ENCODE measurements at regions of chr2 and their contacts with region 1.

Region 1: DNA sequence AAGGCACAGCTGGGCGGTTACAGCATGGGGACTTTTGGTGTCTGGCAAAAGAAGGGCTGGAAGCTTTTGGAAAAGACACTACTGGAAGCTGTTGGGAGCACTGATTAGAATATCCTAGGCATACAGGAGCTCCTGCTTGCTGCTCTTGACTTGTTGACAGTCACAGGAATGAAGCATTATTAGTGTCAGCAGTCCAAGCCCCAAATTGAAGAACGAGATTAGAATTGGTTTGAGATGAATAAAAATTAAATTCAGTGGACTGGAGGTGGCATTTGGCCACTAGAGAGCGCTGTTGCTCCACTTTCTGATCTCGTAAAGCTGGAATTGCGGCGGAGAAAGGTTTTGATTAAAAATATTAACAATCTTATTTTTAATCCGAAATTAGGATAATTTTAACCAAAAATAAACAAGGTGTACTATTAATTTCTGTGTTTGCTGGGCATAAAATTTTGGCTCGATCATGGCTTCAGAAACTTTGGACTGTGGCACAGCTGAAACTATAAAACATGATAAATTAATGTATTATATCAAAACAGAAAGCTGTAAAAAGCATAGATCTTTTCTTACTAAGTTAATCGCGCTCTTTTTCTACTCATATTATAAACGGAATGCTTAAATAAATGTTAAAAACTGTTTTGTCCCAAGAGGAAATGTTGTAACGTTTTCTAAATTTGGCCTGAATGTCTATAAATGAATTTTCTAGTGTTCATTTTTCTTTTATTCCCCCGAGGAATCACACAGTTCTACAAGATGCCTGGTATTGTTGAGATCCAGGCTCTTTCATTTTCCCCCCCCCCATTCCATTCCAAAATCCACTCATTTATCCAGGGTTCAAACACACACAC is 2.4 kb upstream of the HOXD8 start:
- DNase-seq: peak in 3 of 5 donors; percentile 60 to 71 (median 63)
- ATAC-seq: no peak
- H3K4me3 ChIP-seq: no peak overlapping the region
- H3K27ac ChIP-seq: no peak overlapping the region
- H3K4me1 ChIP-seq: peaks cover 4 to 41% (median 22%) of the 10 kb centered on the region in 12 donors
- H3K27me3 ChIP-seq: peaks cover 79 to 100% (median 94%) of the 10 kb centered on the region in 9 donors
- CTCF ChIP-seq: peak; percentile 82 to 97 (median 93)
- POLR2A ChIP-seq: no peak

Region 2: DNA sequence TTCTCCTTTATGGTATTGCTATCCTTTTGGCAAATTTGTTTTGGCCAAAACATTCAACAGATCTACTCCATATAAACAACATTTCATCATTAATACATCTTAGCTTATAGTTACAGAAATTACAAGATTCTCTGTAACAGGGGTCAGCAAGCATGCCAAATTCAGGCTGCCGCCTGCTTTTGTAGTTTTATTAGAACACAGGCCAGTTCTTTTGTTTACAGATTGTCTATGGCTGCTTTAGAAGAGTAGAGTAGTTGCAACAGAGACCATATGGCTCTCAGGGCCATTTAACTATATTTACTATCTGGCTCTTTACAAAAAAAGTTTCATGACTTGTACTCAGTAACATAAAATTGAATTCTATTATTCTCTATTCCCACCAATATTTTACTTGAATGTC is 179.0 kb before region 1 on chr2:
- intact Hi-C with region 1: no loop called
- DNase-seq: no peak
- ATAC-seq: no peak
- H3K4me3 ChIP-seq: no peak overlapping the region
- H3K27ac ChIP-seq: no peak overlapping the region
- H3K4me1 ChIP-seq: no peaks in the 10 kb centered on the region
- H3K27me3 ChIP-seq: no peaks in the 10 kb centered on the region
- CTCF ChIP-seq: no peak
- POLR2A ChIP-seq: no peak

Region 3: GRCh38 chr2:175976391-175977157 is 150.6 kb before region 1 on chr2:
- intact Hi-C with region 1: no loop called
- DNase-seq: no peak
- ATAC-seq: no peak
- H3K4me3 ChIP-seq: no peak overlapping the region
- H3K27ac ChIP-seq: no peak overlapping the region
- H3K4me1 ChIP-seq: peaks cover 0 to 6% (median 0%) of the 10 kb centered on the region in 12 donors
- H3K27me3 ChIP-seq: no peaks in the 10 kb centered on the region
- CTCF ChIP-seq: no peak
- POLR2A ChIP-seq: no peak

Region 4: GRCh38 chr2:176079285-176079830 is 47.8 kb before region 1 on chr2:
- intact Hi-C with region 1: no loop called
- DNase-seq: no peak
- ATAC-seq: peak in 1 of 4 donors; percentile 15
- H3K4me3 ChIP-seq: peak overlapping the region in 2 of 12 donors; percentile 2 to 18
- H3K27ac ChIP-seq: peak overlapping the region in 1 of 12 donors; percentile 79
- H3K4me1 ChIP-seq: peaks cover 0 to 36% (median 12%) of the 10 kb centered on the region in 12 donors
- H3K27me3 ChIP-seq: peaks cover 86 to 99% (median 97%) of the 10 kb centered on the region in 9 donors
- CTCF ChIP-seq: no peak
- POLR2A ChIP-seq: no peak

Region 5: DNA sequence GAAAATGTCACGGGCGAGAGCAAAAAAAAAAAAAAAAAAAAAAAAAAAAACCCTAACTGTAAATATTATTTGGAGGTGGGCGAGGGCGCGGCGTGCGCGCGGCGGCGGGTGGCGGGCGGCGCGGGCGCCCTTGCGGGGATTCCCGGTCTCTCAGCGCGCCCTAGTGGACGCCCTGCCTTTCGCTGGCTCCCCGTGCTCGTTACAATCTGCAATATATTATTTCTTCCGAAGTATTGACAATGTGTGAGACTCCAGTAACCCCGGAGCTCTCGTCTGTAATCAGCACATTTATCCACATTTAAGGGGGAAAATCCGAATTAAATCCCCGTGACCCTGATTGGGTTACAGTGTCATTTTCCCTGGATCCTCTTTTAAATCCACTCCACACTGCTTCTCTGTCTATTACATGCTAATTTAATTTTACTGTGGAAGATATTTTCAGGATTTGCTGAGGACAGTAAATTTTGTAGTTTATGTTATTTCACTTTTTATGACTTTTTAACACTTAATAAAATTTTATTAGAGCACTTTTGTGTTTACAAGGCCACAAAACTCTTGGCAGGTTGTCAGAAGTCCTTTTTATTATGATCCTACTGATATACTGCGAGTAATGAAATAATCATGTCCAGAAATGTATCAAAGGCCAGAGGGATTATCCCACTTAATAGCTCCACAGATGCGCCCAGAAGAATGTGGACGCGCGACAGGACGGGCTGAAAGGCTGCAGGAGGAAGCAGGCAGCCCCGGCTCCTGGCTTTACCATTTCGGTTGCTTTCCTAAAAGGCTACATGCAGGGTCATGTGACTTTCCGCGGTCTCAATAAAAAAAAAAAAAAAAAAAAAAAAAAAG is 511.2 kb after region 1 on chr2:
- intact Hi-C with region 1: loop called in 8 of 10 experiments (anchors 1 to 5 kb)
- DNase-seq: peak; percentile 48 to 74 (median 69)
- ATAC-seq: peak in 3 of 4 donors; percentile 79 to 95 (median 88)
- H3K4me3 ChIP-seq: peak overlapping the region; percentile 49 to 77 (median 60)
- H3K27ac ChIP-seq: peak overlapping the region in 6 of 12 donors; percentile 37 to 77 (median 58)
- H3K4me1 ChIP-seq: peaks cover 0 to 10% (median 4%) of the 10 kb centered on the region in 12 donors
- H3K27me3 ChIP-seq: peaks cover 10 to 96% (median 54%) of the 10 kb centered on the region in 9 donors
- CTCF ChIP-seq: peak; percentile 57 to 88 (median 78)
- POLR2A ChIP-seq: no peak

Region 6: DNA sequence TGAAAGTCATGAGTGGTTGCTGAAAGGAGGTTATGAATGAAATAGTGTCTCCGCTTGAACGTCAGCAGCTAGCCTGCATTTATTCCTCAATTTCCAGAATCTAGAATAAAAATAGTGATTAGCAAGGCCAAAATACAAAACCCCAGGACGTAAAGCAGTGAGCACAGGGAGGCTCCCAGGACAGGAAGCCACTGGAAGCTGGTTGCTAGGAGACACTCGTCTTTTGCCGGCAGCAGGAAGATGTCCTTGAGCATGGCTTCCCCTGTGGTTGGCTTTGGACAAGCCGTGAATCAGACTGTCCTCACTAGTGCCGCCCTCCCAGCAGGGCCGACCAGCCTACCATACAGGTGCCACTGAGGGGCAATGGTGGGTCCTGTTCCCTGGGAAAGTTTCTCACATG is 516.5 kb after region 1 on chr2:
- intact Hi-C with region 1: loop called in 9 of 10 experiments (anchors 1 to 5 kb)
- DNase-seq: no peak
- ATAC-seq: no peak
- H3K4me3 ChIP-seq: no peak overlapping the region
- H3K27ac ChIP-seq: no peak overlapping the region
- H3K4me1 ChIP-seq: no peaks in the 10 kb centered on the region
- H3K27me3 ChIP-seq: peaks cover 4 to 95% (median 47%) of the 10 kb centered on the region in 9 donors
- CTCF ChIP-seq: no peak
- POLR2A ChIP-seq: no peak

Region 7: GRCh38 chr2:176653479-176654443 is 526.6 kb after region 1 on chr2:
- intact Hi-C with region 1: loop called in 4 of 10 experiments (anchors 5 kb)
- DNase-seq: peak; percentile 27 to 68 (median 49)
- ATAC-seq: peak; percentile 58 to 93 (median 84)
- H3K4me3 ChIP-seq: no peak overlapping the region
- H3K27ac ChIP-seq: no peak overlapping the region
- H3K4me1 ChIP-seq: peaks cover 0 to 8% (median 0%) of the 10 kb centered on the region in 12 donors
- H3K27me3 ChIP-seq: peaks cover 0 to 29% (median 3%) of the 10 kb centered on the region in 9 donors
- CTCF ChIP-seq: peak; percentile 31 to 74 (median 62)
- POLR2A ChIP-seq: no peak

Region 8: GRCh38 chr2:176805349-176805748 is 678.2 kb after region 1 on chr2:
- intact Hi-C with region 1: loop called in 8 of 10 experiments (anchors 5 to 10 kb)
- DNase-seq: no peak
- ATAC-seq: no peak
- H3K4me3 ChIP-seq: no peak overlapping the region
- H3K27ac ChIP-seq: no peak overlapping the region
- H3K4me1 ChIP-seq: no peaks in the 10 kb centered on the region
- H3K27me3 ChIP-seq: no peaks in the 10 kb centered on the region
- CTCF ChIP-seq: no peak
- POLR2A ChIP-seq: no peak

Region 9: GRCh38 chr2:176814306-176815052 is 687.3 kb after region 1 on chr2:
- intact Hi-C with region 1: loop called in 8 of 10 experiments (anchors 5 to 10 kb)
- DNase-seq: no peak
- ATAC-seq: no peak
- H3K4me3 ChIP-seq: no peak overlapping the region
- H3K27ac ChIP-seq: peak overlapping the region in 1 of 12 donors; percentile 9
- H3K4me1 ChIP-seq: peaks cover 0 to 20% (median 3%) of the 10 kb centered on the region in 12 donors
- H3K27me3 ChIP-seq: peaks cover 0 to 14% (median 0%) of the 10 kb centered on the region in 9 donors
- CTCF ChIP-seq: peak; percentile 60 to 79 (median 68)
- POLR2A ChIP-seq: no peak

Region 10: DNA sequence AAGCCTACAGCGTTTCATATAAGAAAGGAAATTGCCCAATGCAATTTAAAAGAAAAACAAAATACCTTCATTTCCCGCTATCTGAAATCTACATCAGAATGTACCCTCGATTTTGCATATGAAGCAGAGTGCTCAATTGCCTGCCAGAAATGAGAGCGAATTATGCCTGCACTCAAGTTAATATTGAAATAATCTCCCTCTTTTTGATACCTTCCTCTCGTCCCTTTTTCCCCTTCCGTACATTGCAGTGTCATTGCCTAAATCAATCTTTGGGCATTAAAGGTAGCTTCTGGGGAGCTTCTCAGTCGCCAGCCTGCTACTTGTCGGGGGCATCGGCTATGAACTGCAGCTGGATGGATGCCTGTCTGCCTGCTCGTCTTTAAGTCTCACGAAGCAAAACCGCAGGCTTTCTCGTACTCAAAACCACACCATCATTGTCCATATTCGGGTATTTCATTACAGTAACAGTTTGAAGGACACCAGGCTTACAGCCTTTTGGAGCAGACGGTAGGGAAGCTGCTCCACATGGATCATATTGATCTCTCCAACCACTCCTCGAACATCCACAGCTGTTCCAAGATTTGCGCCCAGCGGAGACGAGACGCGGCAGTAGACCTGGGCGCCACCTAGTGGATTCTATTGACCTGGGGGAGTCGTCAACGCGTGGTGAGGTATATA is 1021.5 kb after region 1 on chr2:
- intact Hi-C with region 1: loop called (anchors 2 to 5 kb)
- DNase-seq: peak; percentile 66 to 82 (median 72)
- ATAC-seq: peak; percentile 64 to 95 (median 82)
- H3K4me3 ChIP-seq: peak overlapping the region in 11 of 12 donors; percentile 8 to 54 (median 45)
- H3K27ac ChIP-seq: no peak overlapping the region
- H3K4me1 ChIP-seq: peaks cover 0 to 14% (median 4%) of the 10 kb centered on the region in 12 donors
- H3K27me3 ChIP-seq: peaks cover 10 to 69% (median 47%) of the 10 kb centered on the region in 9 donors
- CTCF ChIP-seq: peak; percentile 58 to 86 (median 78)
- POLR2A ChIP-seq: no peak

Measured in heart left ventricle (tissue), 16 donors.